ENCODE measurements at regions of chr2 and their contacts with region 1.

Region 1: DNA sequence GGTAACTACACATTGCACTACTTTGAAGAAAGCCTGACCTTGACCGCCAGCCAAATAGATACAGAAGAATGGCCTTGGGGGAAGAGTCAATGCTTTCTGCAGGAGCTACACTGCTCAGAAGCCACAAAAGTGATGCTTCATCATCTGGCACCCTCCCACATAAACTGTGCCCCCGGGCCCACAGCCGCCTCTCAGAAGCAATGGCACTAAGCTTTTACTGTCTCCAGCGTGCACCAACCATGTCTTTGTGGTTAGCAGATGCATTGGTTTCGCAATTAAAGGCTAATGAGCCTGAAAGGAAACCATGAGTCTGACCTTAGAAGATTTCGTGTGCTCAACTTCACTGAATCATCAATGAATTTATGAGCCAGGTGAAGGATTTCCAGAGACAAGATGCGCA is 209.4 kb upstream of the TRIB2 start:
- DNase-seq: no peak
- H3K4me3 Mint-ChIP-seq: peak overlapping the region; percentile 13
- H3K27ac Mint-ChIP-seq: peak overlapping the region; percentile 24
- H3K4me1 Mint-ChIP-seq: peaks cover 63% of the 10 kb centered on the region
- H3K27me3 Mint-ChIP-seq: peaks cover 2% of the 10 kb centered on the region

Region 2: DNA sequence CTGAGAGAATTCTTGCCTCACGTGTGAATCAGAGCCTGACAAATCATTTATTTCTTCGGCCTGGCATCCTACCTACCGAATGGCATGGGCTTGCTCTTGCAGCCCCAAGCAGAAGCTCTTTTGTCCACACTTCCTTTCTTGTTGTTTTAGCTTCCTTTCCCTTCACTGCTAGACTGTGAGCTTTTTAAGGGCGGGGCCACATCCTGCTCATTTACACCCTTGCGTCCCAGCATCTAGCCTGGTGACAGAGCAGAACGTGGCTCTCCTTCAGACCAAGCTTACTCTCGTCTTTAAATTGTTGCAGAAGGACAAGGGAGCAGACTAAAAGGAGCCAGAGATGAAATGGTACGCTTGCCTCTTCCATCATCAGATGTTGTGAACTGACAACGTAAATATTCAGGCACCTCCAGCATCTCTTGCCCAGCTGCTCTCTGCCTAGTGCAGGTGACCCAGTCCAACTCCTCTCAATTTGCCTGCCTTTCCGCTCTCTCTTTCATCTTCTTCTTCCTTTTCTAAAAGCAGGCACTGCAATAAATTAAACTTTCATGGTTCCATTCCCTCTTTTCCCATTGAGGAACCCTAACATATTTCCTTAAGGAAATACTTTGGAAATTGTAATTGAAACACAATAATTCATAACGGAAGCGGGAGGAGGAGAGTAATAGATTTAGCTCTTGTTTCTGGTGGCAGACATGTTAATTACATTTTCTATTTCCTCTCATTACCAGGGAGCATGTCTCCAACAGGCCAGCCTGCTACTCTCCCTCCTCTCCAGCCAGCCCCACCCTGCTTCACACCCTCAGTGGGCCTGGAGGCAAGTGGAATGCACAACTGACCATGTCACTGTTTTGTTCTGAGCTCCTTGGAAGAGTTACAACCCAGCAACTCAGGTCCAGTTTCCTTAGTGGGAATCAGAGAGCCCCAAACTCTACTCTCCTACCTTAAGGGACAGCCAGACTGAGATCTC is 18.7 kb before region 1 on chr2:
- intact Hi-C with region 1: loop called (anchors 2 kb)
- DNase-seq: peak; percentile 42
- H3K4me3 Mint-ChIP-seq: peak overlapping the region; percentile 68
- H3K27ac Mint-ChIP-seq: peak overlapping the region; percentile 28
- H3K4me1 Mint-ChIP-seq: peaks cover 66% of the 10 kb centered on the region
- H3K27me3 Mint-ChIP-seq: no peaks in the 10 kb centered on the region

Measured in activated T-helper 1 cell treated with anti-CD3 and anti-CD28 coated beads, Interleukin-12 subunit alpha, Interleukin-12 subunit beta, Interleukin-2, Interleukin-4 antibody, amounts not matched to agents 30 ng/mL and 10 ng/mL and 1 ng/mL, durations not matched to agents 14 hours and 24 hours and 36 hours (primary cell).